ENCODE measurements at regions of chr16 and their contacts with region 1.

Region 1: GRCh38 chr16:30032083-30032819 is 1.2 kb upstream of the TLCD3B start:
- DNase-seq: peak; percentile 79
- ATAC-seq: peak; percentile 57
- H3K4me3 Mint-ChIP-seq: no peak overlapping the region
- H3K27ac Mint-ChIP-seq: no peak overlapping the region
- H3K4me1 Mint-ChIP-seq: peaks cover 2% of the 10 kb centered on the region
- H3K27me3 Mint-ChIP-seq: peaks cover 46% of the 10 kb centered on the region
- CTCF ChIP-seq: peak; percentile 87

Region 2: DNA sequence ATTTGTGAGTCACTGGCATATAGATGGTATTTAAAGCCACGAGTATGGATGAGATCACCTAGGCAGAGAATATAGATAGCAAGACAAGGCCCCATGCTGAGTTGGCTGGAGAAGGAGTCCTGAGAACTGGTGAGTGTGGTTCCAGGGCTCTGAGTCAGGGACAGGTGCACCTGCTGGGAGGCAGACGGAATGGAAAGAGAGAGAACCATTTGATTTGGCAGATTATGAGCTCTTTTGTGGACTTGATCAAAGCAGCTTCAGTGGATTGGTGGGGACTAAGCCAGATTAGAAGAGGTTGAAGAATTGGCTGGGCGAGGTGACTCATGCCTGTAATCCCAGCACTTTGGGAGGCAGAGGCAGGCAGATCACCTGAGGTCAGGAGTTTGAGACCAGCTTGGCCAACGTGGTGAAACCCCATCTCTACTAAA is 13.5 kb before region 1 on chr16:
- CTCF ChIA-PET with region 1: interaction called, 23 read pairs
- POLR2A ChIA-PET with region 1: interaction called, 4 read pairs
- intact Hi-C with region 1: no loop called
- DNase-seq: peak; percentile 26
- ATAC-seq: peak; percentile 26
- H3K4me3 Mint-ChIP-seq: no peak overlapping the region
- H3K27ac Mint-ChIP-seq: no peak overlapping the region
- H3K4me1 Mint-ChIP-seq: peaks cover 8% of the 10 kb centered on the region
- H3K27me3 Mint-ChIP-seq: no peaks in the 10 kb centered on the region
- CTCF ChIP-seq: no peak

Region 3: GRCh38 chr16:30052671-30053372 is 20.6 kb after region 1 on chr16:
- CTCF ChIA-PET with region 1: interaction called, 36 read pairs
- POLR2A ChIA-PET with region 1: interaction called, 3 read pairs
- intact Hi-C with region 1: no loop called
- DNase-seq: peak; percentile 94
- ATAC-seq: peak; percentile 82
- H3K4me3 Mint-ChIP-seq: peak overlapping the region; percentile 80
- H3K27ac Mint-ChIP-seq: peak overlapping the region; percentile 57
- H3K4me1 Mint-ChIP-seq: peaks cover 16% of the 10 kb centered on the region
- H3K27me3 Mint-ChIP-seq: peaks cover 2% of the 10 kb centered on the region
- CTCF ChIP-seq: no peak

Region 4: GRCh38 chr16:30084816-30085159 is 52.5 kb after region 1 on chr16:
- CTCF ChIA-PET with region 1: no interaction called
- POLR2A ChIA-PET with region 1: no interaction called
- intact Hi-C with region 1: no loop called
- DNase-seq: no peak
- ATAC-seq: no peak
- H3K4me3 Mint-ChIP-seq: no peak overlapping the region
- H3K27ac Mint-ChIP-seq: no peak overlapping the region
- H3K4me1 Mint-ChIP-seq: peaks cover 10% of the 10 kb centered on the region
- H3K27me3 Mint-ChIP-seq: no peaks in the 10 kb centered on the region
- CTCF ChIP-seq: no peak